Naive thymus-derived CD4-positive, alpha-beta T cell (primary cell): ENCODE measurements at regions of chr1 and their contacts with region 1.

Region 1: GRCh38 chr1:114757455-114758250 is at the start of gene CSDE1:
- DNase-seq: peak; percentile 91 to 97 (median 96)
- ATAC-seq: peak; percentile 90
- H3K4me3 ChIP-seq: peak within 1 kb of the TSS; percentile 100
- H3K4me3 Mint-ChIP-seq: peak within 1 kb of the TSS; percentile 95 to 100 (median 100)
- H3K27ac ChIP-seq: peak within 1 kb of the TSS; percentile 97
- H3K27ac Mint-ChIP-seq: peak within 1 kb of the TSS; percentile 97 to 100 (median 100)
- H3K4me1 ChIP-seq: peaks cover 44 to 49% of the 10 kb centered on the region in 2 donors
- H3K4me1 Mint-ChIP-seq: peaks cover 32 to 60% (median 51%) of the 10 kb centered on the region in 7 donors
- H3K27me3 ChIP-seq: no peaks in the 10 kb centered on the region
- H3K27me3 Mint-ChIP-seq: no peaks in the 10 kb centered on the region
- total RNA-seq, gene CSDE1: 378 to 638 (median 561) TPM

Region 2: GRCh38 chr1:112955781-112956543 is 1801.7 kb before region 1 on chr1 and contains the start of gene SLC16A1:
- CTCF ChIA-PET with region 1: no interaction called
- POLR2A ChIA-PET with region 1: no interaction called
- intact Hi-C with region 1: loop called (anchors 1 to 5 kb)
- DNase-seq: peak; percentile 80 to 94 (median 87)
- ATAC-seq: peak; percentile 90
- H3K4me3 ChIP-seq: peak within 1 kb of the TSS; percentile 97
- H3K4me3 Mint-ChIP-seq: peak within 1 kb of the TSS; percentile 71 to 100 (median 97)
- H3K27ac ChIP-seq: peak within 1 kb of the TSS; percentile 81
- H3K27ac Mint-ChIP-seq: peak within 1 kb of the TSS; percentile 25 to 100 (median 88)
- H3K4me1 ChIP-seq: peaks cover 16 to 17% of the 10 kb centered on the region in 2 donors
- H3K4me1 Mint-ChIP-seq: peaks cover 33 to 66% (median 57%) of the 10 kb centered on the region in 7 donors
- H3K27me3 ChIP-seq: no peaks in the 10 kb centered on the region
- H3K27me3 Mint-ChIP-seq: no peaks in the 10 kb centered on the region
- total RNA-seq, gene SLC16A1: 10.1 to 43.6 (median 19.1) TPM

Region 3: DNA sequence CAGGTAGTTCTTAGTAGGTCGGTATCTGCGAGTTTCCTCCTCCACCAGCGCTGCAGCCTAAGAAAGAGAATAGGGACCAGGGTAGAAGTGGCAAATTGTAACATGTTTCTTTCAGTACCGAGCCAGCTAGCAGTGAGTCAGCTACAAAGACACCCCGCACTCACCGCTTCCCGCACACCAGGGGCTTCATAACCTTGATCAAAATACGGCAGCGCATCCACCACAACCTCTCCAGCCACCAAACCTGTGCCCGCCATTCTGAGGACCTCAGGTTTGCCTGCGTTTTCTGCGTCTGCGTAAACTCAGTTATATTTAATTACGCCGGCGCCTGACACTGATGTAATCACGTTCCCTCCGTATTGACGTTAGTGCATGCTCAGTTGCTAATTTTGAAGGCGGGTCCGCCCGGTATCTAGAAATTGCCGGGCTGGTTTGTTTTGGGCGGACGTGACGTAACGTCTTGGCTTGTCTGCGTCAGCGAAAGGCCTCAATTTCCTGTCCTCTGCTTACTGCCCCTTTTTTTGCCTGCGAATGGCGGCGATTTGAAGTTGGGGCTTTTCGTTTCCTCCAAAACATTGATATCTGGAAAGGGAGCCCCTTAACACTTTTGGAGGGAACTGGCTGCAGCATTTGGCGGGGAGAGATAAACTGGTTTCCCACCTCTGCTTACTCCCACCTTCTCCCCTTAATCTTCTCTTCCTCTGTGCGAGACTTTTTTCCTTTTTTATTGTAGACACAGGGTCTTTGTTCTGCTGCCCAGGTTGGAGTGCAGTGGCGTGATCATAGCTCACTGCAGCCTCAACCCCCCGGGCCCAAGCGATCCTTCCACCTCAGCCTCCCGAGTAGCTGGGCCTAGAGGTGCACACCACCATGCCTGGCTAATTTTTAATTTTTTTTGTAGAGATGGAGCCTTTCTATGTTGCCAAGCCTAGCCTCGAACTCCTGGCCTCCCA is 176.0 kb before region 1 on chr1 and contains the start of gene BCAS2:
- CTCF ChIA-PET with region 1: no interaction called
- POLR2A ChIA-PET with region 1: interaction called, 10 read pairs
- intact Hi-C with region 1: loop called (anchors 1 kb)
- DNase-seq: peak; percentile 71 to 98 (median 97)
- ATAC-seq: peak; percentile 97
- H3K4me3 ChIP-seq: peak within 1 kb of the TSS; percentile 76
- H3K4me3 Mint-ChIP-seq: peak within 1 kb of the TSS; percentile 92 to 99 (median 98)
- H3K27ac ChIP-seq: peak within 1 kb of the TSS; percentile 93
- H3K27ac Mint-ChIP-seq: peak within 1 kb of the TSS; percentile 95 to 99 (median 98)
- H3K4me1 ChIP-seq: peaks cover 21 to 23% of the 10 kb centered on the region in 2 donors
- H3K4me1 Mint-ChIP-seq: peaks cover 14 to 55% (median 41%) of the 10 kb centered on the region in 7 donors
- H3K27me3 ChIP-seq: peaks cover 0 to 3% of the 10 kb centered on the region in 2 donors
- H3K27me3 Mint-ChIP-seq: peaks cover 0 to 4% (median 4%) of the 10 kb centered on the region in 5 donors
- total RNA-seq, gene BCAS2: 32.3 to 87.1 (median 46.0) TPM

Region 4: GRCh38 chr1:114716304-114717170 is 41.1 kb before region 1 on chr1 and contains the start of gene NRAS:
- CTCF ChIA-PET with region 1: no interaction called
- POLR2A ChIA-PET with region 1: interaction called, 36 read pairs
- intact Hi-C with region 1: loop called (anchors 1 kb)
- DNase-seq: peak; percentile 90 to 96 (median 94)
- ATAC-seq: peak; percentile 98
- H3K4me3 ChIP-seq: peak within 1 kb of the TSS; percentile 98
- H3K4me3 Mint-ChIP-seq: peak within 1 kb of the TSS; percentile 91 to 100 (median 96)
- H3K27ac ChIP-seq: peak within 1 kb of the TSS; percentile 98
- H3K27ac Mint-ChIP-seq: peak within 1 kb of the TSS; percentile 93 to 99 (median 97)
- H3K4me1 ChIP-seq: peaks cover 17 to 20% of the 10 kb centered on the region in 2 donors
- H3K4me1 Mint-ChIP-seq: peaks cover 10 to 34% (median 25%) of the 10 kb centered on the region in 7 donors
- H3K27me3 ChIP-seq: no peaks in the 10 kb centered on the region
- H3K27me3 Mint-ChIP-seq: no peaks in the 10 kb centered on the region
- total RNA-seq, gene NRAS: 22.3 to 56.0 (median 25.0) TPM

Region 5: GRCh38 chr1:114771992-114772391 is 14.3 kb after region 1 on chr1:
- CTCF ChIA-PET with region 1: no interaction called
- POLR2A ChIA-PET with region 1: interaction called, 47 read pairs
- intact Hi-C with region 1: no loop called
- DNase-seq: no peak
- ATAC-seq: no peak
- H3K4me3 ChIP-seq: no peak overlapping the region
- H3K4me3 Mint-ChIP-seq: no peak overlapping the region
- H3K27ac ChIP-seq: no peak overlapping the region
- H3K27ac Mint-ChIP-seq: no peak overlapping the region
- H3K4me1 ChIP-seq: no peaks in the 10 kb centered on the region
- H3K4me1 Mint-ChIP-seq: no peaks in the 10 kb centered on the region
- H3K27me3 ChIP-seq: no peaks in the 10 kb centered on the region
- H3K27me3 Mint-ChIP-seq: no peaks in the 10 kb centered on the region

Region 6: DNA sequence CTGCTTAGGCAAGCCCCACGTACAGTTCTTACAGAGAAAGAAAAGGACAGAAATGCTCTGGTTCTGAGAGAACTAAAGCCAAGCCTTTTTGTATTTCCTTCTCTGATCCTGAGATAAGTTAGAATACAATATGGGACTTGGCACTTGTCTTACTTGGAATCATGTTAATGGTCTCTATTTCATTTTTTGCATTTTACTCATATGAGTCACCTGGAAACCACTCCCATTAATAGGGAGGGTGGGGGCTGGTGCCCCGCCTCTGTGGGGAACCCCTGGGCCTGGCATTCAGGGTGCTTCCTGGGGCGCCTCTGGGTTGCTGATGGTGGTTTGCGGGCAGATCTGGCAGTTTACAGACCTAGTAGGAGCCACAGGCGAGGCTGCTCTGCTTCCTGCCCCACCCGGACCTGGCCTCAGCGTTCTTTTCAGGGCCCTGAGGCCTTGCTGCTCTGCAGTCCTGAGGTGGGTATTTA is 304.9 kb after region 1 on chr1:
- CTCF ChIA-PET with region 1: no interaction called
- POLR2A ChIA-PET with region 1: no interaction called
- intact Hi-C with region 1: loop called (anchors 1 kb)
- DNase-seq: peak; percentile 70 to 97 (median 97)
- ATAC-seq: peak; percentile 97
- H3K4me3 ChIP-seq: peak overlapping the region; percentile 36
- H3K4me3 Mint-ChIP-seq: peak overlapping the region; percentile 60 to 87 (median 78)
- H3K27ac ChIP-seq: peak overlapping the region; percentile 84
- H3K27ac Mint-ChIP-seq: peak overlapping the region; percentile 89 to 100 (median 99)
- H3K4me1 ChIP-seq: peaks cover 32% of the 10 kb centered on the region in 2 donors
- H3K4me1 Mint-ChIP-seq: peaks cover 36 to 59% (median 46%) of the 10 kb centered on the region in 7 donors
- H3K27me3 ChIP-seq: no peaks in the 10 kb centered on the region
- H3K27me3 Mint-ChIP-seq: peaks cover 0 to 6% (median 0%) of the 10 kb centered on the region in 5 donors

Region 7: GRCh38 chr1:115642168-115643072 is 884.8 kb after region 1 on chr1:
- CTCF ChIA-PET with region 1: no interaction called
- POLR2A ChIA-PET with region 1: no interaction called
- intact Hi-C with region 1: loop called in 1 of 2 experiments (anchors 5 kb)
- DNase-seq: peak in 3 of 9 donors; percentile 7 to 53 (median 15)
- ATAC-seq: peak; percentile 59
- H3K4me3 ChIP-seq: peak overlapping the region; percentile 47
- H3K4me3 Mint-ChIP-seq: peak overlapping the region; percentile 71 to 88 (median 80)
- H3K27ac ChIP-seq: no peak overlapping the region
- H3K27ac Mint-ChIP-seq: peak overlapping the region in 2 of 9 donors; percentile 32 to 72
- H3K4me1 ChIP-seq: peaks cover 0 to 7% of the 10 kb centered on the region in 2 donors
- H3K4me1 Mint-ChIP-seq: peaks cover 10 to 18% (median 14%) of the 10 kb centered on the region in 7 donors
- H3K27me3 ChIP-seq: peaks cover 0 to 4% of the 10 kb centered on the region in 2 donors
- H3K27me3 Mint-ChIP-seq: peaks cover 20 to 49% (median 35%) of the 10 kb centered on the region in 5 donors